ENCODE measurements at regions of chrX and their contacts with region 1.

Region 1: DNA sequence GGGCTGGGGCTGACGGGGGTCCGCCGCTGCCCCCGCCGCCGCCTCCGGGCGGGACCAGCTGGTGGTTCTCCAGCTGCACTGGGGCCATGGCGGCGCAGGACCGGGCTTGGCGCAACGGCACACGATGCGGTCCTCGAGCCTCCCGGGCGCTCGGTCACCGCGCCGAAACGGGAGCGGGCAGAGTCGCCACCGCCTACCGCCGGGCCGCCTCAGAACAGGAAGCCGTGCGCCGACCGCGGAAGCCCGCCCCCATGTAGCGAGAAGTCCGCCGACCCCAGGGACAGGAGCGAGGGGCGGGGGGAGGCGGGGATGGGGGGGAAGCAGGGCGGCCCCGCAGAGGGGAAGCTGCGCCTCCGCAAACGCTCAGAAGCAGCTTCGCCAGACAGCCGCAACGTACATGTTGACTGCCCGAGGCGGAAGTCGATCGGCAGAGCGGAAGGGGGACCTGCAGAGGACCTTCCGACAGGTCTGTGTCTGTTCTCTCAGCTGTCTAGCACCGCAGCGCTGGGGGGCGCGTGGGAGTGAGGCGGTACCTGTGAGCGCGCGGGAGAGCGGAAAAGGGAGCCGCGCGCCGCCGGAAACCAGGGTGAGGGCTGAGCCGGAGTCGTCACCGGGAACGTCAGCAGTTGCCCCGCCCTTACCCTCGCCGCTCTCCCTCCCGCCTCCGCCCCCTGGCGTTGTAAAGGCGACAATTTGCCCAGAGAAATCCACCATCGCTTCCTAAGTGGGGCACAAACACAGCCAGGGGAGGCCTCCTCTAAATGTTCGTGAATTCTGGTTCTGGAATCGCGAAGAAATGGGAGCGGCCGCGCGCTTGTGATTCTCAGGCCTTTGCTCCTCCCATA is at the start of gene MED14:
- DNase-seq: peak; percentile 83
- H3K4me3 Mint-ChIP-seq: peak within 1 kb of the TSS; percentile 82
- H3K27ac Mint-ChIP-seq: peak within 1 kb of the TSS; percentile 91
- H3K4me1 Mint-ChIP-seq: peaks cover 29% of the 10 kb centered on the region
- H3K27me3 Mint-ChIP-seq: no peaks in the 10 kb centered on the region
- total RNA-seq, gene MED14: 37.8 and 44.7 TPM in 2 replicates

Region 2: DNA sequence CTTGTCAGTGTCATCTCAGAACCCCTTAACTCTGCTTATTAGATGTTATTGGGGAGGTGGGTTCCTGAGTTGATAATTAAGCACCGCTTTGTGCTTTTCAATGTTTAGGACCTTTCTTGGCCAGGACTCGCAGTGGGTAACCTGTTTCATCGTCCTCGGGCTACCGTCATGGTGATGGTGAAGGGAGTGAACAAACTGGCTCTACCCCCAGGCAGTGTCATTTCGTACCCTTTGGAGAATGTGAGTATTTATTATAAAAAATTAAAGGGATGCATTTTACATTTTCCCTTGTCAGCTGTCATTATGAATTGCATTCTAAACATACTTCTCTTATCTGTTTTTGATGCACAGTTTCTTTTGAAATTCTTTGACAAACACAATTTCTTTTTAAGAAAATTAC is 144.4 kb before region 1 on chrX:
- intact Hi-C with region 1: loop called (anchors 1 kb)
- DNase-seq: no peak
- H3K4me3 Mint-ChIP-seq: no peak overlapping the region
- H3K27ac Mint-ChIP-seq: no peak overlapping the region
- H3K4me1 Mint-ChIP-seq: peaks cover 18% of the 10 kb centered on the region
- H3K27me3 Mint-ChIP-seq: no peaks in the 10 kb centered on the region

Region 3: GRCh38 chrX:40683245-40683644 is 52.3 kb before region 1 on chrX:
- intact Hi-C with region 1: loop called (anchors 5 kb)
- DNase-seq: no peak
- H3K4me3 Mint-ChIP-seq: no peak overlapping the region
- H3K27ac Mint-ChIP-seq: no peak overlapping the region
- H3K4me1 Mint-ChIP-seq: peaks cover 15% of the 10 kb centered on the region
- H3K27me3 Mint-ChIP-seq: no peaks in the 10 kb centered on the region

Region 4: GRCh38 chrX:41084044-41084892 is 348.7 kb after region 1 on chrX:
- intact Hi-C with region 1: loop called (anchors 2 kb)
- DNase-seq: peak; percentile 88
- H3K4me3 Mint-ChIP-seq: peak overlapping the region; percentile 89
- H3K27ac Mint-ChIP-seq: peak overlapping the region; percentile 99
- H3K4me1 Mint-ChIP-seq: peaks cover 18% of the 10 kb centered on the region
- H3K27me3 Mint-ChIP-seq: no peaks in the 10 kb centered on the region

Measured in activated T-helper 2 cell treated with anti-CD3 and anti-CD28 coated beads, Interferon-gamma antibody, Interleukin-2, Interleukin-4, amounts not matched to agents 10 μg/mL and 5 μg/mL and 100 μg/mL, durations not matched to agents 14 hours and 24 hours and 36 hours (primary cell).